ENCODE measurements at regions of chr11 and their contacts with region 1.

Region 1: GRCh38 chr11:9170450-9170849 is 79.1 kb upstream of the SCUBE2 start:
- DNase-seq: no peak
- ATAC-seq: no peak
- H3K4me3 Mint-ChIP-seq: no peak overlapping the region
- H3K27ac Mint-ChIP-seq: no peak overlapping the region
- H3K4me1 Mint-ChIP-seq: no peaks in the 10 kb centered on the region
- H3K27me3 Mint-ChIP-seq: no peaks in the 10 kb centered on the region
- CTCF ChIP-seq: no peak

Region 2: GRCh38 chr11:9025101-9025850 is 145.2 kb before region 1 on chr11:
- CTCF ChIA-PET with region 1: no interaction called
- POLR2A ChIA-PET with region 1: interaction called, 10 read pairs
- intact Hi-C with region 1: no loop called
- DNase-seq: no peak
- ATAC-seq: no peak
- H3K4me3 Mint-ChIP-seq: no peak overlapping the region
- H3K27ac Mint-ChIP-seq: no peak overlapping the region
- H3K4me1 Mint-ChIP-seq: no peaks in the 10 kb centered on the region
- H3K27me3 Mint-ChIP-seq: no peaks in the 10 kb centered on the region
- CTCF ChIP-seq: no peak

Region 3: GRCh38 chr11:9379046-9379445 is 208.6 kb after region 1 on chr11:
- CTCF ChIA-PET with region 1: no interaction called
- POLR2A ChIA-PET with region 1: interaction called, 12 read pairs
- intact Hi-C with region 1: no loop called
- DNase-seq: no peak
- ATAC-seq: no peak
- H3K4me3 Mint-ChIP-seq: no peak overlapping the region
- H3K27ac Mint-ChIP-seq: no peak overlapping the region
- H3K4me1 Mint-ChIP-seq: peaks cover under 1% of the 10 kb centered on the region
- H3K27me3 Mint-ChIP-seq: no peaks in the 10 kb centered on the region
- CTCF ChIP-seq: no peak